Panc1 (cell line): ENCODE measurements at regions of chr4 and their contacts with region 1.

Region 1: GRCh38 chr4:766559-767283 is 59.2 kb downstream of the CPLX1 start:
- DNase-seq: no peak
- ATAC-seq: peak; percentile 48
- H3K4me3 ChIP-seq: no peak overlapping the region
- H3K27ac ChIP-seq: peak overlapping the region; percentile 48; the same call in 1 of the 2 replicates
- H3K4me1 ChIP-seq: peaks cover 40% of the 10 kb centered on the region
- H3K27me3 ChIP-seq: no peaks in the 10 kb centered on the region
- CTCF ChIP-seq: no peak

Region 2: DNA sequence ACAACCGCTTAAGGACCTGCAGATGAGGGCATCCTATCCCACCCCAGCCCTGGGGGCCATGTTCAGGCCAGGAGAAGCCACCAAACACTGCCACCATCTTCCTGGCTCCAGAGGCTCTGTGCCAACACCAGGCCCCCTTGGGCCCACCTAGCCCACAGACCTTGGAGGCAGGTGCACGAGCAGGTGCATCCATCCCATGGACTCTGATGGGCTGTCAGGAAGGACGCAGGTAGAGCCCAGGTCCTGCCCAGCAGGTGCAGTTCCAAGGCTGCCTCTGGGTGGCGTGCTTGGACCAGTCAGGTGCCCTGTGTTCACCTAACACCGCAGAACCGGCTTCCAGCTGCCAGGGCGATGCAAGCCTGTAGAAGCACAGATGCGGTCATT is 164.2 kb before region 1 on chr4:
- CTCF ChIA-PET with region 1: no interaction called
- POLR2A ChIA-PET with region 1: interaction called, 10 read pairs
- in situ Hi-C with region 1: no loop called
- intact Hi-C with region 1: no loop called
- DNase-seq: peak; percentile 35
- ATAC-seq: peak; percentile 98
- H3K4me3 ChIP-seq: no peak overlapping the region
- H3K27ac ChIP-seq: no peak overlapping the region
- H3K4me1 ChIP-seq: no peaks in the 10 kb centered on the region
- H3K27me3 ChIP-seq: no peaks in the 10 kb centered on the region
- CTCF ChIP-seq: peak; percentile 87

Region 3: DNA sequence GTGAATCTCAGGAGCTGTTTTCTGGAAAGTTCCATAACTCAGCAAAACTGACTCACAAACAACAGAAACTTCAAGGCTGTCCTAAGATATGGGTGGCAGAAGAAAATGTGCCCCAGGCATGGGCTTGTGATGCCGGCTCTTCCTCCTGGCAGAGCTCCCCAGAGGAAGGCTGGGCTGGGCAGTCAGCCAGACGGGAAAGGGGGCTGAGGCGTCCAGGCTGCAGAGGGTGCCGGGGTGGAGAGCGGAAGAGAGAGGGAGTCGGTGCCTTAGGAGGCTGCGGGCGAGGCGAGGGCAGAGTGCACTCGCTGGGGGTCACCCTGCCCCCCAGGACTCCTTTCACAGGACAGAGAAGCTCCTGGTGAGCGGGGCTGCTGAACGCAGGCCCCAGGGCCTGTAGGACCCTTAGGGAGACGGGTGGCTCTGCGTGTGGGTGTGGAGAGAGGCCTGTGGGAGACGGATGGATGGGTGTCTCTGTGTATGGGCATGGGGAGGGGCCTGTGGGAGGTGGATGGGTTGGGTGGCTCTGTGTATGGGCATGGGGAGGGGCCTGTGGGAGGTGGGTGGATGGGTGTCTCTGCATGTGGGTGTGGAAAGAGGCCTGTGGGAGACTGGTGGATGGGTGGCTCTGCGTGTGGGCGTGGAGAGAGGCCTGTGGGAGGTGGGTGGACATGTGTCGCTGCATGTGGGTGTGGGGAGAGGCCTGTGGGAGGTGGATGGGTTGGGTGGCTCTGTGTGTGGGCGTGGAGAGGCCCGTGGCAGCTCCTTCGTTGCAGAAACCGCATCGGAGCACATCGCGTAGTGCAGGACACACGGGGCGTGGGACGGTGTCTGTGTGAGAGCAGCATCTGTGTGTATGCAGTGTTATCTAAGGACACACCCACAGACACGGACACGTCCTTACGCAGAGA is 45.2 kb before region 1 on chr4:
- CTCF ChIA-PET with region 1: no interaction called
- POLR2A ChIA-PET with region 1: no interaction called
- in situ Hi-C with region 1: no loop called
- intact Hi-C with region 1: no loop called
- DNase-seq: no peak
- ATAC-seq: no peak
- H3K4me3 ChIP-seq: no peak overlapping the region
- H3K27ac ChIP-seq: no peak overlapping the region
- H3K4me1 ChIP-seq: peaks cover 2% of the 10 kb centered on the region; the same call in 1 of the 2 replicates
- H3K27me3 ChIP-seq: no peaks in the 10 kb centered on the region
- CTCF ChIP-seq: no peak